Activated CD4-positive, alpha-beta memory T cell treated with anti-CD3 and anti-CD28 coated beads for 36 hours (primary cell): ENCODE measurements at regions of chr7 and their contacts with region 1.

Region 1: DNA sequence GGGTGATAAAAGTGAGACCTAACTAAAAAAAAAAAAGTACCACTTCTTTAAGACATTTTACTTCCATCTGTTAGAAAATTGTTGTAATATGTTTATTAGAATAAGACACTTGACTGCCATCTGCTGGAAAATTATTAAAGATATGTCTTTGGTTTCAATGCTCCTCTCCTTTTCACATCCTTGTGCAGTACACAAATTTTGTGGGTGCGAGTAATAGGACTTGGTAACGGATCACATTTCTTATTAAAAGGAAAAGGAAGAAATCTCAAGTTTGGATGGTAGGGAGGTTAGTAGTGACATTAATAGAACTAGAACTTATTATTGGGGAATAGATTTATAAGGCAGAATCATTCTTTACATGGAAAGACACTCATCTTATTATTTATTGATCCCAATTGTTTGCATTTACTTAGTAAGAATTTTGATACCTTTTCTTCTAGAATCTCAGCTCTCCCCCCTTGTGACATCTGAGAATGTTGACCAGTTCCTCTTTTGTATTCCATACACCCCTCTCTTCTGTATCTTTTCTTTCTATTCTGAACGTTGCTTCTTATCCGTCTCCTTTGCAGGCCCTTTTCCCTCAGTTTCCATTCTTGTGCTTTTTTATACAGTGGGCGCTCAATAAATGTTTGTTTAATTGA is 43.1 kb upstream of the RPA3 start:
- DNase-seq: no peak
- H3K4me3 Mint-ChIP-seq: peak overlapping the region; percentile 88
- H3K27ac Mint-ChIP-seq: peak overlapping the region; percentile 83
- H3K4me1 Mint-ChIP-seq: peaks cover 32% of the 10 kb centered on the region
- H3K27me3 Mint-ChIP-seq: no peaks in the 10 kb centered on the region

Region 2: GRCh38 chr7:7595451-7595850 is 166.0 kb before region 1 on chr7:
- CTCF ChIA-PET with region 1: interaction called, 5 read pairs
- POLR2A ChIA-PET with region 1: no interaction called
- intact Hi-C with region 1: loop called (anchors 1 kb)
- DNase-seq: no peak
- H3K4me3 Mint-ChIP-seq: no peak overlapping the region
- H3K27ac Mint-ChIP-seq: no peak overlapping the region
- H3K4me1 Mint-ChIP-seq: no peaks in the 10 kb centered on the region
- H3K27me3 Mint-ChIP-seq: no peaks in the 10 kb centered on the region

Region 3: GRCh38 chr7:7681179-7681935 is 80.1 kb before region 1 on chr7:
- CTCF ChIA-PET with region 1: interaction called, 51 read pairs
- POLR2A ChIA-PET with region 1: no interaction called
- intact Hi-C with region 1: loop called (anchors 1 kb)
- DNase-seq: no peak
- H3K4me3 Mint-ChIP-seq: no peak overlapping the region
- H3K27ac Mint-ChIP-seq: peak overlapping the region; percentile 52
- H3K4me1 Mint-ChIP-seq: peaks cover 30% of the 10 kb centered on the region
- H3K27me3 Mint-ChIP-seq: no peaks in the 10 kb centered on the region

Region 4: DNA sequence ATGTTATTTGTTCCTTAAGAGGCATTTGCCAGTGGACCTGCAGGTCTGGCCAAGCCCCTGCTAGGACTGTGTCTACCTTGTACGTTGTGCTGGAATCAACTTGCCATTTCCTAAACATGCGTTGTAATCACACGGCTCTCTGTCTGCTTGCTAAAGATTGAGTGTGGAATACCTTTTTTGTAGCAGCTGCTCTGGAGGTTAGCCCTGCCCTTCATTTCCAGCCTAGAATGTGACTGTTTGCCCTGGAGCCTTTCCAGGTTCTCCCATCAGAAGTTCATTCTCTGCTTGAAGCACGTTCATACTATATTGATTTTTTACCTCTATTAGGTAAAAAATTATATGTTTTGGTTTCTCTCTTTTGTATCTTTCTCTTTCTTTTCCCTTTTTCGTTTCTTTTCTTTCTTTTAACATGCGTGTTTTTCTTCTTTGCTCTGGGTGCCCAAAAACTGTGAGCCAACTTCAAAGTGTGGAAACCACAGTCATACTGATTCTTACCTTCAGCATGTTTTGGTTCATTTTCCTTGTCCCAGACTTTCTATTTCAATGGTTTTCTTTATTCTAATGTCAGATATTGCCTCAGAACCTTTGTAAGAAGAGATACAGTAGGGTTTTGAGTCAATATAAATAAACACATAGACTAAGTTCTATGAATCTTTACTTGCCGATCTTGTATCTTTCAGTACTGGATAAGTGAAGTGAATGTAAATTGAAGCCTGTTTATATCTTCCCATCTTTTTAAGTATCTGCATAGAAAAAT is 68.8 kb after region 1 on chr7:
- CTCF ChIA-PET with region 1: no interaction called
- POLR2A ChIA-PET with region 1: no interaction called
- intact Hi-C with region 1: no loop called
- DNase-seq: no peak
- H3K4me3 Mint-ChIP-seq: no peak overlapping the region
- H3K27ac Mint-ChIP-seq: peak overlapping the region; percentile 5
- H3K4me1 Mint-ChIP-seq: peaks cover 11% of the 10 kb centered on the region
- H3K27me3 Mint-ChIP-seq: no peaks in the 10 kb centered on the region

Region 5: DNA sequence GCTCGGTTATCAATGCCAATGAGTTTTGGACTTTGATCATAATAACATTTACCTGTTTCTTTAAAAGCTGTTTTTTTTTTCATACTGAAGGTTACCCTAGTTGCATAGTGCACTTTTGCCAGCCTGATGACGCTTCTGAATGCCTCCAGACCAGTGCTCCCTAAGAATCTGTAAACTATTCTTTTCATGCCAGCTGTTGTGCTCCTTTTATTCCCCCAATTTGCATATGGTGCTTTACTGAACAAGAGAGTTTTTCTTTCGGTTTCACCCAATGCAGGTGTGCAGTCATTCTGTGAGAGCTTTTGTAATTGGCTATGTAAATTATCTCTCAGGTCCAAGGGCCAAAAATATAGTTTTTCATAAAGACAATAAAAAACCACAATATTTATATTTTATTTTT is 159.0 kb after region 1 on chr7:
- CTCF ChIA-PET with region 1: no interaction called
- POLR2A ChIA-PET with region 1: no interaction called
- intact Hi-C with region 1: loop called (anchors 2 kb)
- DNase-seq: peak; percentile 32
- H3K4me3 Mint-ChIP-seq: peak overlapping the region; percentile 55
- H3K27ac Mint-ChIP-seq: no peak overlapping the region
- H3K4me1 Mint-ChIP-seq: peaks cover 41% of the 10 kb centered on the region
- H3K27me3 Mint-ChIP-seq: no peaks in the 10 kb centered on the region

Region 6: GRCh38 chr7:8134089-8134733 is 372.8 kb after region 1 on chr7:
- CTCF ChIA-PET with region 1: no interaction called
- POLR2A ChIA-PET with region 1: no interaction called
- intact Hi-C with region 1: loop called (anchors 5 kb)
- DNase-seq: peak; percentile 66
- H3K4me3 Mint-ChIP-seq: peak overlapping the region; percentile 35
- H3K27ac Mint-ChIP-seq: peak overlapping the region; percentile 71
- H3K4me1 Mint-ChIP-seq: peaks cover 60% of the 10 kb centered on the region
- H3K27me3 Mint-ChIP-seq: no peaks in the 10 kb centered on the region

Region 7: GRCh38 chr7:8217200-8218068 is 456.0 kb after region 1 on chr7:
- CTCF ChIA-PET with region 1: interaction called, 3 read pairs
- POLR2A ChIA-PET with region 1: no interaction called
- intact Hi-C with region 1: loop called (anchors 5 kb)
- DNase-seq: no peak
- H3K4me3 Mint-ChIP-seq: no peak overlapping the region
- H3K27ac Mint-ChIP-seq: no peak overlapping the region
- H3K4me1 Mint-ChIP-seq: peaks cover 2% of the 10 kb centered on the region
- H3K27me3 Mint-ChIP-seq: no peaks in the 10 kb centered on the region